Activated CD8-positive, alpha-beta T cell treated with anti-CD3 and anti-CD28 coated beads for 36 hours (primary cell): ENCODE measurements at regions of chr18 and their contacts with region 1.

Region 1: DNA sequence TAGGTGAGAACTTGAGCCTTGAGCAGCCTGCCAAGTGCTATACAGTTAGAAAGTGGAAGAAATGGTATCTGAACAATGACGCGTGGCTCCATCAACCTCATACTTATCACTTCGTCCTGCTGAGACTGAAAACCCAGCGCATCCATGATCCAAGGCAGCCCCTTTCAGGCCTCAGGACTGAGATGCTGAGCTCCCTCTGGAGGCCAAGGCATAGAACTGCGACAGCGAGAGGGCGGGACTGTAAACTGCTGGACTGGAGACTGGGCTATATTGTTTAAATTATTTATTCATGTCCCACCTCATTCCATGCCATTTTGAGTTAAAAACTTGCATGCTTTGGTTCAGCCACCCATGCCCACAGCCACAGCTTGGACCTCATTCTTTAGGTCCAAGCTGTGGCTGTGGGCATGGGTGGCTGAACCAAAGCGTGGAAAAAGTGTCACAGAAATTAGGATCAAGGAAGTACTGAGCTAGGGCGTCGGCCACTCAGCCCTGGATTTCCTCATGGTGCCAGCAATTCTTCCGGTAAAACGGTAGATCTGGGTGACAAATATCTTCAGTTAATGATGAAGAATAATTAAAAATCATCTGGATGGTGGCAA is 195.5 kb downstream of the L3MBTL4 start:
- DNase-seq: peak; percentile 19
- ATAC-seq: no peak
- H3K4me3 Mint-ChIP-seq: no peak overlapping the region
- H3K27ac Mint-ChIP-seq: no peak overlapping the region
- H3K4me1 Mint-ChIP-seq: no peaks in the 10 kb centered on the region
- H3K27me3 Mint-ChIP-seq: no peaks in the 10 kb centered on the region
- CTCF ChIP-seq: no peak

Region 2: DNA sequence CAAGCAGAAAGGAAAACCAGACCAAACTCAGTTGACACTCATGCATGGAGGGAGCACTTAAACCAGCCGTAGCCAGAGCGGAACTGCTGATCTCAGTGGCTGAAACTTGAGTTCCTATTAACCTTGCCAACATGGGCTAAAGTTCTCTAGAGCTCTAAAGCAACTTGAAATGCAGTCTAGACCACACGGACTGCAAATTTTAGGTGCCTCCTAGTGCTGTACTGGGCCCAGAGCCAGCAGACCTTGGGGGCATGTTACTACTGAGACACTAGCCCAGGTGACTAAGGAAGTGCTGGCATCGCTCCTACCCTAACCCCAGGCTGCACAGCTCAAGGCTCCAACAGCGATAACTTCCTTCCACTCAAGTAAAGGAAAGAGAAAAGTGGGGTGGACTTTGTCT is 1258.6 kb before region 1 on chr18:
- CTCF ChIA-PET with region 1: no interaction called
- POLR2A ChIA-PET with region 1: no interaction called
- intact Hi-C with region 1: no loop called
- DNase-seq: no peak
- ATAC-seq: no peak
- H3K4me3 Mint-ChIP-seq: no peak overlapping the region
- H3K27ac Mint-ChIP-seq: no peak overlapping the region
- H3K4me1 Mint-ChIP-seq: no peaks in the 10 kb centered on the region
- H3K27me3 Mint-ChIP-seq: no peaks in the 10 kb centered on the region
- CTCF ChIP-seq: no peak

Region 3: GRCh38 chr18:5884375-5884774 is 334.8 kb before region 1 on chr18:
- CTCF ChIA-PET with region 1: interaction called, 4 read pairs
- POLR2A ChIA-PET with region 1: no interaction called
- intact Hi-C with region 1: loop called (anchors 10 kb)
- DNase-seq: no peak
- ATAC-seq: no peak
- H3K4me3 Mint-ChIP-seq: no peak overlapping the region
- H3K27ac Mint-ChIP-seq: no peak overlapping the region
- H3K4me1 Mint-ChIP-seq: no peaks in the 10 kb centered on the region
- H3K27me3 Mint-ChIP-seq: peaks cover 14% of the 10 kb centered on the region
- CTCF ChIP-seq: no peak

Region 4: GRCh38 chr18:6270771-6271216 is 51.6 kb after region 1 on chr18:
- CTCF ChIA-PET with region 1: interaction called, 3 read pairs
- POLR2A ChIA-PET with region 1: no interaction called
- intact Hi-C with region 1: loop called (anchors 10 kb)
- DNase-seq: no peak
- ATAC-seq: no peak
- H3K4me3 Mint-ChIP-seq: no peak overlapping the region
- H3K27ac Mint-ChIP-seq: no peak overlapping the region
- H3K4me1 Mint-ChIP-seq: no peaks in the 10 kb centered on the region
- H3K27me3 Mint-ChIP-seq: peaks cover 2% of the 10 kb centered on the region
- CTCF ChIP-seq: no peak